CD8-positive, alpha-beta memory T cell (primary cell): ENCODE measurements at regions of chr12 and their contacts with region 1.

Region 1: GRCh38 chr12:54993161-54993835 is 8.7 kb upstream of the TESPA1 start:
- DNase-seq: peak; percentile 36 to 71 (median 64)
- H3K4me3 ChIP-seq: no peak overlapping the region
- H3K4me3 Mint-ChIP-seq: peak overlapping the region in 1 of 7 donors; percentile 42
- H3K27ac ChIP-seq: no peak overlapping the region
- H3K27ac Mint-ChIP-seq: peak overlapping the region in 3 of 8 donors; percentile 2 to 42 (median 4)
- H3K4me1 ChIP-seq: peaks cover 44% of the 10 kb centered on the region
- H3K4me1 Mint-ChIP-seq: peaks cover 39 to 46% (median 45%) of the 10 kb centered on the region in 3 donors
- H3K27me3 ChIP-seq: no peaks in the 10 kb centered on the region
- H3K27me3 Mint-ChIP-seq: peaks cover 0 to 2% of the 10 kb centered on the region in 2 donors

Region 2: DNA sequence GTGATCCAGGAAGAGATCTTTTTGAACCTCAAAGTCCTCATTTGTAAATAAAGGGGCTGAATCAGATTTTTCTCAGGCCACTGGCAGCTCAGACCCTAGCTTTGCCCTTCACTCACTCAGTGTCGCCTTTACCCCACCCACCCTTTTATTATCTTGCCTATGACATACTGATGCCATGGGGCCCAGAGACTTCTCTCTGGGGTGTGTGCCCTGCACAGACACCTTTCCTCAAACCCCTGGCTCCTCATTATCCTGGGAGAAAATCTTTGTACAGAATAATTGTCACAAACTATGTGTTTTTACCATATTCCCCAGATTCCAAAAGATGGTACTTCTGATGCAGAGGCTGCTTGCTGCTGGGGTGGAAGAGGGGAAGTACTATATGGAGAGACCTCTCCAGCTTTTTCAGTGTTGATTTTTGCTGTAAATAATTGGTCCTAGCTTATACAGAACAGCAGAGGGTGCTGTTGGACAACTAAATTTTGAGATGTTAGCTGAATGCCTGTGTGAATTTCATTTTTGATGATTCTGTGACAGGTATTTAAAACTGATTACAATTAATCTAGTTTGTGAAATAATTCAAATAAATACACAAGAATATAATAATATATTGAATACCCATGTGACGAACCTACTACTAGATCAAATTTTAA is 291.2 kb before region 1 on chr12:
- CTCF ChIA-PET with region 1: interaction called, 14 read pairs
- POLR2A ChIA-PET with region 1: no interaction called
- DNase-seq: peak in 2 of 5 donors; percentile 37 to 47
- H3K4me3 ChIP-seq: no peak overlapping the region
- H3K4me3 Mint-ChIP-seq: no peak overlapping the region
- H3K27ac ChIP-seq: no peak overlapping the region
- H3K27ac Mint-ChIP-seq: no peak overlapping the region
- H3K4me1 ChIP-seq: no peaks in the 10 kb centered on the region
- H3K4me1 Mint-ChIP-seq: no peaks in the 10 kb centered on the region
- H3K27me3 ChIP-seq: no peaks in the 10 kb centered on the region
- H3K27me3 Mint-ChIP-seq: peaks cover 6 to 7% of the 10 kb centered on the region in 2 donors

Region 3: DNA sequence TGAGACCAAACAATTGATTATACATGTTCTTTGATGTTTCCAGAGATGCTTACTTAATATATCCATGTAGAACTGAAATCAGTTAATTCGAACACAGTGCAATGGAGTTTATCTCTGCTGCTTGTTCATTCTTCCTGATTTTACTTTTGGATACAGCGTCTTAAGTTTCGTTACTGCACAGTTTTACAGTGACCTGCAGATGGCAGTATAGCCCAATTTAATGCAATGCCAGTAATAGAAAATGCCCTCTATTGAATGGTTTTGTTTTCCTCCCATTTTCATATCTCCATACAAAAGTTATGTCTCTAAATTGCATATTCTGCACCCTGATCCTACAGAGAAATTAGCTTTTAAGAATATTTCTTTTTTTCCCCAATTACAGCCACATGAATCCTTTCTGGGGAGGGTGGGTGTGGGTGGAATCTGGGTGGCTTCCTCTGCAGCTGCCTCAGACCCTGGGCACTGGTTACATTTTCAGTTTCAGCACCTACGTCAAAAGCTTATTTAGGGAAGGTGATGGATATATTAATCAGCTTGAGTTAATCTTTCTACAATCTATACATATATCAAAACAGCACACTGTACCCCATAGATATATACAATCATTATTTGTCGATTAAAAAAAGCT is 244.0 kb before region 1 on chr12:
- CTCF ChIA-PET with region 1: interaction called, 28 read pairs
- POLR2A ChIA-PET with region 1: no interaction called
- DNase-seq: peak in 4 of 5 donors; percentile 20 to 57 (median 42)
- H3K4me3 ChIP-seq: no peak overlapping the region
- H3K4me3 Mint-ChIP-seq: peak overlapping the region in 6 of 7 donors; percentile 10 to 73 (median 60)
- H3K27ac ChIP-seq: no peak overlapping the region
- H3K27ac Mint-ChIP-seq: peak overlapping the region in 3 of 8 donors; percentile 6 to 64 (median 22)
- H3K4me1 ChIP-seq: peaks cover 16% of the 10 kb centered on the region
- H3K4me1 Mint-ChIP-seq: peaks cover 15 to 24% (median 23%) of the 10 kb centered on the region in 3 donors
- H3K27me3 ChIP-seq: no peaks in the 10 kb centered on the region
- H3K27me3 Mint-ChIP-seq: peaks cover 0 to 6% of the 10 kb centered on the region in 2 donors

Region 4: DNA sequence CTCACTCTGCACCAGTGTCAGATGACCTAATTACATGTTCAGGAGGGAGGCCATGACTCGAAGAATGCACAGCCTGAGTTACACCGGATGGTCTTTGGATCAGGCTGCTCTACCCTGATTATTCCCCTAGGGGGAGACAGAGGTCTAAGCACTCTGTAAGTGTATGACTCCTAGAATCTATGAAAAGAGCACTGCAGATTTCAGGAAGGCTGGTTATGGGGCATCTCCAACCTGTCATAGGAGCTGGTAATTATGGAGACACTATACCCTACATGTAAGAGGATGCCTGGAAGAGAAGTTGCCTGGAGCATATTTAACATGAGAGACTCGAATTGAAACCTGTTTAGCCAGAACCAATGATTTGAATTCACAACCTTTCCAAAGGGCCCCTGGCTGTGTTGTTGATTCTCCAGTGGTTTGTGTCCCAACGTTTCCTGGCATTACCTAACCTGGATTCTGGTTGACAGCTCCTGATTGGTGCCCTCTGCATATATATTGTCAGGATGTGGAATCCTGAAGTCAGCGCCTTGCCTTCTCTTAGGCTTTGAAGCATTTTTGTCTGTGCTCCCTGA is 139.2 kb before region 1 on chr12 and contains the start of gene MUCL1:
- CTCF ChIA-PET with region 1: interaction called, 24 read pairs
- POLR2A ChIA-PET with region 1: no interaction called
- DNase-seq: peak; percentile 41 to 72 (median 55)
- H3K4me3 ChIP-seq: no peak within 1 kb of the TSS
- H3K4me3 Mint-ChIP-seq: no peak within 1 kb of the TSS
- H3K27ac ChIP-seq: no peak within 1 kb of the TSS
- H3K27ac Mint-ChIP-seq: peak within 1 kb of the TSS in 3 of 8 donors; percentile 9 to 25 (median 13)
- H3K4me1 ChIP-seq: no peaks in the 10 kb centered on the region
- H3K4me1 Mint-ChIP-seq: peaks cover 0 to 4% (median 2%) of the 10 kb centered on the region in 3 donors
- H3K27me3 ChIP-seq: no peaks in the 10 kb centered on the region
- H3K27me3 Mint-ChIP-seq: peaks cover 0 to 13% of the 10 kb centered on the region in 2 donors
- total RNA-seq, gene MUCL1: not detected

Region 5: GRCh38 chr12:54958048-54958658 is 35.1 kb before region 1 on chr12:
- CTCF ChIA-PET with region 1: interaction called, 22 read pairs
- POLR2A ChIA-PET with region 1: no interaction called
- DNase-seq: peak in 4 of 5 donors; percentile 35 to 65 (median 50)
- H3K4me3 ChIP-seq: no peak overlapping the region
- H3K4me3 Mint-ChIP-seq: peak overlapping the region in 3 of 7 donors; percentile 11 to 36 (median 35)
- H3K27ac ChIP-seq: no peak overlapping the region
- H3K27ac Mint-ChIP-seq: peak overlapping the region in 4 of 8 donors; percentile 12 to 76 (median 57)
- H3K4me1 ChIP-seq: peaks cover 78% of the 10 kb centered on the region
- H3K4me1 Mint-ChIP-seq: peaks cover 61 to 93% (median 79%) of the 10 kb centered on the region in 3 donors
- H3K27me3 ChIP-seq: no peaks in the 10 kb centered on the region
- H3K27me3 Mint-ChIP-seq: no peaks in the 10 kb centered on the region

Region 6: GRCh38 chr12:54967461-54967860 is 25.8 kb before region 1 on chr12:
- CTCF ChIA-PET with region 1: interaction called, 22 read pairs
- POLR2A ChIA-PET with region 1: interaction called, 4 read pairs
- DNase-seq: peak in 1 of 5 donors; percentile 49
- H3K4me3 ChIP-seq: peak overlapping the region; percentile 21
- H3K4me3 Mint-ChIP-seq: peak overlapping the region in 4 of 7 donors; percentile 3 to 60 (median 42)
- H3K27ac ChIP-seq: no peak overlapping the region
- H3K27ac Mint-ChIP-seq: peak overlapping the region; percentile 6 to 93 (median 73)
- H3K4me1 ChIP-seq: peaks cover 52% of the 10 kb centered on the region
- H3K4me1 Mint-ChIP-seq: peaks cover 43 to 89% (median 61%) of the 10 kb centered on the region in 3 donors
- H3K27me3 ChIP-seq: no peaks in the 10 kb centered on the region
- H3K27me3 Mint-ChIP-seq: no peaks in the 10 kb centered on the region

Region 7: DNA sequence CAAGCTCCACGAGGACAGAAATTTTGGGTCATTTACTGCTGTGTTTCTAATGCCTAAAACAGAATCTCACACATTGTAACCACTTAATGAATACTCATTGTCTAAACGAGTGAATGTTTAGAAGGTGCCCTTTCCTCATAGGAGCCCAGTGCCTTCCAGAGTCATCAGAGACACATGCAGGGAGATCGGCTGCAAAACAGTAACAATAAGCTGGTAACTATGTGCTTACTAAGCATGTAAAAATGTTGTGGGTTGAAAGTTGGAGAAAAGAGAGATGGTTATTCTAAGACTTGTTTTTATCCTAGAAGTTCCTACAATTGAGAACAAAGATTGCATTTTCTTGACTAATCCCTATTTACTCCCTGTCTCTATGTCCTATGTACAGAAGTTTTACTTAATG is 16.1 kb before region 1 on chr12:
- CTCF ChIA-PET with region 1: interaction called, 24 read pairs
- POLR2A ChIA-PET with region 1: no interaction called
- DNase-seq: no peak
- H3K4me3 ChIP-seq: peak overlapping the region; percentile 6
- H3K4me3 Mint-ChIP-seq: peak overlapping the region; percentile 60 to 83 (median 72)
- H3K27ac ChIP-seq: no peak overlapping the region
- H3K27ac Mint-ChIP-seq: peak overlapping the region in 7 of 8 donors; percentile 17 to 98 (median 69)
- H3K4me1 ChIP-seq: peaks cover 97% of the 10 kb centered on the region
- H3K4me1 Mint-ChIP-seq: peaks cover 94 to 100% (median 99%) of the 10 kb centered on the region in 3 donors
- H3K27me3 ChIP-seq: no peaks in the 10 kb centered on the region
- H3K27me3 Mint-ChIP-seq: no peaks in the 10 kb centered on the region

Region 8: GRCh38 chr12:55289999-55290398 is 296.7 kb after region 1 on chr12:
- CTCF ChIA-PET with region 1: no interaction called
- POLR2A ChIA-PET with region 1: no interaction called
- DNase-seq: no peak
- H3K4me3 ChIP-seq: no peak overlapping the region
- H3K4me3 Mint-ChIP-seq: no peak overlapping the region
- H3K27ac ChIP-seq: no peak overlapping the region
- H3K27ac Mint-ChIP-seq: no peak overlapping the region
- H3K4me1 ChIP-seq: no peaks in the 10 kb centered on the region
- H3K4me1 Mint-ChIP-seq: no peaks in the 10 kb centered on the region
- H3K27me3 ChIP-seq: no peaks in the 10 kb centered on the region
- H3K27me3 Mint-ChIP-seq: peaks cover 9 to 50% of the 10 kb centered on the region in 2 donors